Endothelial cell of umbilical vein (primary cell): ENCODE measurements at regions of chr18 and their contacts with region 1.

Region 1: GRCh38 chr18:10851824-10852319 is 297.5 kb downstream of the PIEZO2 start:
- DNase-seq: peak; percentile 70
- H3K4me3 ChIP-seq: no peak overlapping the region
- H3K27ac ChIP-seq: no peak overlapping the region
- H3K4me1 ChIP-seq: peaks cover 18% of the 10 kb centered on the region
- H3K27me3 ChIP-seq: no peaks in the 10 kb centered on the region
- CTCF ChIP-seq: peak in 1 of 2 donors; percentile 52
- POLR2A ChIP-seq: no peak

Region 2: GRCh38 chr18:10787293-10787901 is 64.5 kb before region 1 on chr18:
- CTCF ChIA-PET with region 1: interaction called, 20 read pairs
- POLR2A ChIA-PET with region 1: no interaction called
- dilution Hi-C with region 1: no loop called
- intact Hi-C with region 1: loop called (anchors 2 kb)
- DNase-seq: peak; percentile 72
- H3K4me3 ChIP-seq: no peak overlapping the region
- H3K27ac ChIP-seq: no peak overlapping the region
- H3K4me1 ChIP-seq: no peaks in the 10 kb centered on the region
- H3K27me3 ChIP-seq: peaks cover 0 to 2% of the 10 kb centered on the region in 2 experiments
- CTCF ChIP-seq: peak; percentile 82 to 87
- POLR2A ChIP-seq: no peak

Region 3: DNA sequence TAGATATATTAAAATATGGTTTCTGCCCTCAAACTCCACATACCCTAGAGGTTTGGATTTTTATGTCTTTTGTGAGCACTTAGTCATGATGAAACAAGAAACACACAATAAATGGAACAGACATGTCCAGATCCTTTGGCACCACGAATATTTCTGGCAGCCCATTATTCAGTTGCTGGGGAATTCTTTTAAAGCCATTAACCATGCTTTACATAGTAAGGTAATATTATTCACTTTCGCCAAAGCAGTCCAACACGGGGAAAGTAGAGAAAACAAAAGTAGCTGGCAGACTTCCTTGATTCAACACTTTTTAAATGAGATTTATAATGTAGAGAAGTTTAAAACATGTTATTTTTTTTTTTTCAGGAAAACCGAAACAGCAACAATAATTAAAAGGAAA is 62.0 kb after region 1 on chr18:
- CTCF ChIA-PET with region 1: no interaction called
- POLR2A ChIA-PET with region 1: no interaction called
- dilution Hi-C with region 1: no loop called
- intact Hi-C with region 1: no loop called
- DNase-seq: peak; percentile 24
- H3K4me3 ChIP-seq: no peak overlapping the region
- H3K27ac ChIP-seq: peak overlapping the region; percentile 23
- H3K4me1 ChIP-seq: peaks cover 19% of the 10 kb centered on the region
- H3K27me3 ChIP-seq: no peaks in the 10 kb centered on the region
- CTCF ChIP-seq: no peak
- POLR2A ChIP-seq: no peak

Region 4: DNA sequence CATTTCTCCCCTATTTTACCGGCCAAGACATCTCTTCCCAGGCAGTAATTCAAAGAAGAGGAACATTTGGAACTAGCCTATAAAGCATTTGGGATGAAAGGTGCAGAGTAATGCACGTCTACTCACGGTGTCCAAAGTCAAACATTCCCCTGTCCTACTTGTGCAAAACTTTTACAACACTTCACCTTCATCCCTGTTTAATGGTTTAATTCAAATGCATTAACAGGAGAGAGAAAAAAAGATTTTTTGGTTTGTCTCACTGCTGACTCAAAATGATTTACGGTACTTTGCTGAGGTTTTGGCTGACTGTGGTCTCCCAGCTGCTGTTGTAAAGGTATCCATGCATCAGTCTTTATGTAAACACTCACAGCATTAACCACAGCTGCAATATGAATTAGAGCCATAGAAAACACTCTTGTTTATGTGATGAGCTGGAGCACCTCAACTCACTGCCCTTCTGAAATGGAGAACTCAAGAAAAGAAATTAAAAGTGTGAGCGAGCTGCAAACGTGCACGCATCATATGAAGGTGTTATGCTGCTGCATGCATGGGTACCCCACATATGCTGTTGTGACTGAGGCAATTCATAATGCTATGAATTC is 77.0 kb after region 1 on chr18:
- CTCF ChIA-PET with region 1: interaction called, 12 read pairs
- POLR2A ChIA-PET with region 1: no interaction called
- dilution Hi-C with region 1: no loop called
- intact Hi-C with region 1: loop called (anchors 1 kb)
- DNase-seq: no peak
- H3K4me3 ChIP-seq: no peak overlapping the region
- H3K27ac ChIP-seq: peak overlapping the region; percentile 93
- H3K4me1 ChIP-seq: peaks cover 40% of the 10 kb centered on the region
- H3K27me3 ChIP-seq: no peaks in the 10 kb centered on the region
- CTCF ChIP-seq: no peak
- POLR2A ChIP-seq: no peak

Region 5: GRCh38 chr18:10971717-10972116 is 119.8 kb after region 1 on chr18:
- CTCF ChIA-PET with region 1: no interaction called
- POLR2A ChIA-PET with region 1: no interaction called
- dilution Hi-C with region 1: no loop called
- intact Hi-C with region 1: no loop called
- DNase-seq: no peak
- H3K4me3 ChIP-seq: no peak overlapping the region
- H3K27ac ChIP-seq: no peak overlapping the region
- H3K4me1 ChIP-seq: peaks cover 9% of the 10 kb centered on the region
- H3K27me3 ChIP-seq: no peaks in the 10 kb centered on the region
- CTCF ChIP-seq: no peak
- POLR2A ChIP-seq: no peak

Region 6: DNA sequence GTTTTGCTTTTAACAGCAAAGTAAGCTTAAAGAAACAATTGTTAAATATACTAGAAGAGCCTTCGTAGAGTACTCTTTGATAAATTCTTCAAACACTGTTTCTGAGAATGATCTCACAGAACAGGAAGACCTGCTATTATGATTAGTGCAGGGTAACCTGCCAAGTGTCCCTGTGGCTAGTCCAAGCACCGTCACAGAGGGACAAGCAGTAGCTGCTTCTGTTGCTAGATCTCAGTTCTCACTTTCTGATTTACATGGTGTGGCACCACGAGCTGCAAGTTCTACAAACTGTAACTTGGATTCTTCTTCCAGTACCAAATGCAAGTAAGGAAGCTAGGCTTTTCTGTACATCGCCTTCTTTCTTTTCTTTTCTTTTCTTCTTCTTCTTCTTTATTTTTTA is 176.0 kb after region 1 on chr18:
- CTCF ChIA-PET with region 1: interaction called, 11 read pairs
- POLR2A ChIA-PET with region 1: no interaction called
- dilution Hi-C with region 1: no loop called
- intact Hi-C with region 1: no loop called
- DNase-seq: peak; percentile 15
- H3K4me3 ChIP-seq: no peak overlapping the region
- H3K27ac ChIP-seq: no peak overlapping the region
- H3K4me1 ChIP-seq: peaks cover 12% of the 10 kb centered on the region
- H3K27me3 ChIP-seq: no peaks in the 10 kb centered on the region
- CTCF ChIP-seq: no peak
- POLR2A ChIP-seq: no peak

Region 7: GRCh38 chr18:11149441-11150270 is 297.8 kb after region 1 on chr18 and contains the start of gene PIEZO2:
- CTCF ChIA-PET with region 1: interaction called, 128 read pairs
- POLR2A ChIA-PET with region 1: no interaction called
- dilution Hi-C with region 1: no loop called
- intact Hi-C with region 1: loop called (anchors 1 kb)
- DNase-seq: peak; percentile 29
- H3K4me3 ChIP-seq: peak within 1 kb of the TSS in 2 of 3 experiments; percentile 21 to 25
- H3K27ac ChIP-seq: no peak within 1 kb of the TSS
- H3K4me1 ChIP-seq: no peaks in the 10 kb centered on the region
- H3K27me3 ChIP-seq: peaks cover 44 to 47% of the 10 kb centered on the region in 2 experiments
- CTCF ChIP-seq: no peak
- POLR2A ChIP-seq: no peak
- total RNA-seq, gene PIEZO2: 5.0 and 11.2 TPM in 2 replicates

Region 8: GRCh38 chr18:11163665-11164064 is 311.8 kb after region 1 on chr18:
- CTCF ChIA-PET with region 1: interaction called, 29 read pairs
- POLR2A ChIA-PET with region 1: no interaction called
- dilution Hi-C with region 1: no loop called
- intact Hi-C with region 1: no loop called
- DNase-seq: peak; percentile 36
- H3K4me3 ChIP-seq: no peak overlapping the region
- H3K27ac ChIP-seq: no peak overlapping the region
- H3K4me1 ChIP-seq: no peaks in the 10 kb centered on the region
- H3K27me3 ChIP-seq: peaks cover 0 to under 1% of the 10 kb centered on the region in 2 experiments
- CTCF ChIP-seq: peak; percentile 74 to 84
- POLR2A ChIP-seq: no peak